ENCODE measurements at regions of chr18 and their contacts with region 1.

Region 1: DNA sequence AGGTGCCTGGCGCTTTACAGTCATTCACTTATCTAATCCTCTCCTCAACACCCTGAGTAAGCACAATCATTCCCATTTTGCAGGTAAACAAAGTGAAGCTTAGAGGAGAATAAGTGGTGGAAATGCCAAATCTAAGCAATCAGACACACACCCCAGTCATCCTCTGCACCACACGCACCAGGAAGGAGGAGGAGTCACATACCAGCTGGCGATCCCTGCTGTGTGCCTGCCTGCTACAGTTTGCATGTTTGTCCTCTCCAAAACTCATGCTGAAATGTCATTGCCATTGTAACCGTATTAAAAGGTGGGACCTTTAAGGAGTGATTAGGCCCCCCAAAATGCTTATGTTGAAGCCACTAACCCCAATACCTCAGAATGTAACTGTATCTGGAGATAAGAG is 93.7 kb downstream of the LOXHD1 start:
- DNase-seq: no peak
- ATAC-seq: no peak
- H3K4me3 ChIP-seq: no peak overlapping the region
- H3K27ac ChIP-seq: no peak overlapping the region
- H3K4me1 ChIP-seq: no peaks in the 10 kb centered on the region
- H3K27me3 ChIP-seq: no peaks in the 10 kb centered on the region
- CTCF ChIP-seq: no peak

Region 2: GRCh38 chr18:46622999-46623398 is 59.7 kb after region 1 on chr18:
- intact Hi-C with region 1: loop called in 2 of 10 experiments (anchors 2 to 10 kb)
- DNase-seq: no peak
- ATAC-seq: peak in 1 of 8 donors; percentile 8
- H3K4me3 ChIP-seq: no peak overlapping the region
- H3K27ac ChIP-seq: no peak overlapping the region
- H3K4me1 ChIP-seq: peaks cover 0 to 15% (median 8%) of the 10 kb centered on the region in 9 donors
- H3K27me3 ChIP-seq: peaks cover 0 to 25% (median 4%) of the 10 kb centered on the region in 7 donors
- CTCF ChIP-seq: peak in 5 of 9 donors; percentile 8 to 38 (median 17)

Region 3: DNA sequence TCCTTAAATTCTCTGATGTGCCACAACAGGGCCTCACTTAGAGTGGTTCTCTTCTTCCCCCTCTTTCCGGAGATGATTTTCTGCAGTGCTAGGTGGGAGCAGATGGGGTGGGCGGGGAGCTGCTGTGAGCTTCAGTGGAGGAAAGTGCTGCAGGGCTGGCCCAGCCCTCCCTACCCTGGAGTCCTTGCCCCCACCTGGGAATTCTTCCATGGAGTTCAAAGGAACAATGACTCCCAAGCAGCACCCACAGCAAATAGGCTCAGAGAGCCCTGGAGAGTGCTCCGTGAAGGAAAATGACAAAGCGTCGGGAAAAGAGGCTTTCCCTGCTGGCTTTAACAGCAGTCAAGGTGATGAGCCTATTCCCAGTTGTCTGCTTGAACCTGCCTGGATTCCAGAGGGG is 64.9 kb after region 1 on chr18:
- intact Hi-C with region 1: loop called in 2 of 10 experiments (anchors 2 to 10 kb)
- DNase-seq: no peak
- ATAC-seq: no peak
- H3K4me3 ChIP-seq: no peak overlapping the region
- H3K27ac ChIP-seq: no peak overlapping the region
- H3K4me1 ChIP-seq: peaks cover 0 to 12% (median 6%) of the 10 kb centered on the region in 9 donors
- H3K27me3 ChIP-seq: peaks cover 0 to 30% (median 5%) of the 10 kb centered on the region in 7 donors
- CTCF ChIP-seq: no peak

Region 4: DNA sequence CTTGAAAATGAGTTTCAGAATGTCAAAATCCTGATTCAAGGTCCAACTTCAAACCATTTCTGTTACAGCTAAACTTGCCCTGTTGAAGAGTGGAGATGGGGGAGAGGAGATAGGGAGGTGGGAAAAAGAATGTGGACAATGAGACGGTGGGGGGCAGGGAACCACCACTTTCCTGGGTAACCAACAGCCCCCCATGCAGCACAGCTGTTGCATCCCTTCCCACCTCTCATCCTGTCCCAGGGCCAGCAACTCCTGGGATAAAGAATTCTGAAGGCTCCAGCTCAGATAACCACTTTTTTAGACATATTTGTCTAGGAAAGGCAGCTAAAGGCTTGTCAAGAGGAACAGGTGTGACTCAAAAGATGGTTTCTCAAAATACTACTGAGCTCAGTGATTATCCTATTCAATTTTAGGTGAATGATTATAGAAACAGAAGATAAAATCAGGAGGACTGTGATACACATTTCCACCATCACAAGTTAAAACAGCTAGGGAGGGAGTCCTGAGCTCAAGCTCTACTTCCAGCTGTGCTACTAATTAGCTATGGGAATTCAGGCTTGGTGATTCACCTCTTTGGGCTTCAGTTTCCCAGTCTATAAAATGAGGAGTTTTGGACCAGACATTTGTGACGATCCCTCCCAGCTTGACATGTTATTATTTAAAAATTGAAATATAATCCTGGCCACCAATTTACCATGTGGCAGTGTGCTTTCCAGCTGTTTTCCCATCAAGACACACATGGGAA is 550.7 kb after region 1 on chr18:
- intact Hi-C with region 1: no loop called
- DNase-seq: no peak
- ATAC-seq: no peak
- H3K4me3 ChIP-seq: no peak overlapping the region
- H3K27ac ChIP-seq: no peak overlapping the region
- H3K4me1 ChIP-seq: peaks cover 0 to 4% (median 0%) of the 10 kb centered on the region in 9 donors
- H3K27me3 ChIP-seq: no peaks in the 10 kb centered on the region
- CTCF ChIP-seq: no peak